ENCODE measurements at regions of chr2 and their contacts with region 1.

Region 1: DNA sequence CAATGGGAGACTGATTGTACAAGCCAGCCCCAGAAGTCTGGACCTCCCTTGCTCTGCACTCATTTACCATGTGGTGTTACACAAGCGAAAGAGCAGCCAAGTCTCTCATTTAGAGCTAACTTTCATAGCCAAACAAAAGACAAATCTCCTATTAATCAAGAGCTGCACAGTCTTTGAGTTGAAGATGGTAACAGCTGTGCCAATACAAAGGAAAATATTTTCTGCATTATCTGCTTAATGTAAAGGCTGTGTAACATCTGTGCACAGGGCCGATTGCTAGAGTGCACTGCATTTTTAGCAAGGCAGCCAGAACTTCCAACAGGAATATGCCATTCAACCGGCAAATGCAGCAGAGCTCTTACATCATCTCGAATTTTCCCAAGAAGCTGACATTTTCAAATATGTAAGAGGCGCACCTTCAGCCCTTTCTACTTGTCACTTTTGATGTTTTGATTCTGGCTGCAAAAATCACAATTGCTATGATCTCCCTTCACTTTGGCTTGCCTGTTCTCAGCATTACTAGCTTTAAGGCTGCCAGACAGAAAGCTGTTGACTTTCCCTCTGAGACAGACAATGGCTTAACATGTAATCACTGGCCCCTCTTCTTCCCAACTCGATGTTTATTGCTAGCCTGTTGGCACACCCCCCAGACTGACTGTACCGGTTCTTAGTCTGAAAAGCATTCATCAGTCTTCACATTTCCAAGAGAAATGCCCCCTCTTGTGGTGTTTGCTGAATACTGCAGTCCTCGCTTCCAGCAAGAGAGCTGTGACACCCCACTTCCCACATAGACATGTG is 96.9 kb upstream of the TANK start:
- DNase-seq: peak; percentile 48
- CTCF ChIP-seq: peak; percentile 89

Region 2: GRCh38 chr2:160252278-160252887 is 811.0 kb before region 1 on chr2:
- CTCF ChIA-PET with region 1: interaction called, 11 read pairs
- POLR2A ChIA-PET with region 1: no interaction called
- DNase-seq: peak; percentile 26
- CTCF ChIP-seq: peak; percentile 61

Region 3: DNA sequence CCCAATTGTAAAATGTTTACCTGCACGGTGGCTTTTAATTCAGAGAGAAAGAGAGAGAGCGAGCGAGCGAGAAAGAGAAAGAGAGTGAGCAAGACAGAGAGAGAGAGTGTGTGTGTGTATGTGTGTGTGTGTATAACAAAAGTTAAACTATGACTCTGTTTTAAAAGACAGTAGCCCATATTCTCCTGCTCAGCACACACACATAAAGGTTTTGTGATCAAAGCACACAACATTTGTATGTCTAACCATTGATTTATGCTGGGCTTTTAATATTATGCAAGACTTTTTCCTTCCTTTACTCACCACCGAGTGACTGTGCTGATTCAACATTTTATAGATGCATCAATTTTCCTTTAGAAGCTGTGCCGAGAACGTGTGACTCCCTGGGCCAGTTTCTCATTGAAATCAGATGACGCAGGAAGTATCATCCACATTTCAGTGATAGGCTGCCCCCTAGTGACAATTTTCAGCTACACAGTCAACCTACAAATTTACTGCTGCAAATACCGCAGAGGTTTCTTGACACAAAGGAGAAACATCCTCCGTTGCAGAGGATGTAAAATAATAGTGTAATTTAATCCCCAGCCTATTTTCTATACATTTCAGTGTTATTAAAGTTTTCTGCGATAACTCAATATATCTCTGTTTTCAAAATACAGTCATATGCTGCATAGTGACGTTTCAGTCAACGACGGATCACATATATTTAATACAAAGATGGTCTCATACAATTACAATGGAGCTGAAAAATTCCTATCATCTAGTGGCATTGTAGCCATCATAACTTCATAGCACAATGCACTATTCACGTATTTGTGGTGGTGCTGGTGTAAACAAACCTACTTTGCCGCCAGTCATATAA is 69.0 kb before region 1 on chr2:
- CTCF ChIA-PET with region 1: interaction called, 13 read pairs
- POLR2A ChIA-PET with region 1: no interaction called
- DNase-seq: peak; percentile 46
- CTCF ChIP-seq: peak; percentile 81

Region 4: GRCh38 chr2:161052214-161052613 is 11.1 kb before region 1 on chr2:
- CTCF ChIA-PET with region 1: interaction called, 38 read pairs
- POLR2A ChIA-PET with region 1: no interaction called
- DNase-seq: no peak
- CTCF ChIP-seq: no peak

Region 5: DNA sequence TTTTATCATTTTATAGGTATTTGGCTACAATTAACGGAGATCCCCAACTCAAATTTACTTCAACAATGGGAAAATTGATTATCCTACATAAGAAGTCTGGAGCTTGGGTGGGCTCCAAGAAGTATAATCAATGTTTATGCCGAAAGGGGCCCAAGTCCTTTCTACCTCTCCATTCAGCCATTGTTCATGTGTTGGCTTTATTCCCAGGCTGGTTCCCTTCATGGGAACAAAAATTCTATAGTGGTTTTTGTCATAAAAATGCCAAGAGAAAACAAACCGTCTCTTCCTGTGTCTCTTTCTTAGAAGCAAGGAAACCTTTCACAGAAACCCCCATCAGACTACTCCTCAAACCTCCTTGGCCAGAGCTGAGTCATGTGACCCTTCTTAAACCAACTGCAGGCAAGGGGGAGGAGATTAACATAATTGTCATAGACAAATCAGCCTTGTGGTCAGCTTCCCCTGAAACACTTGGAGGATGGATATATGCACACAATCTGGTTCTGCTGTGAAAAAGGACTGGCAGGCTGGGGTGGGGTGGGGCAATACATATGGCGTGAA is 21.8 kb after region 1 on chr2:
- CTCF ChIA-PET with region 1: interaction called, 105 read pairs
- POLR2A ChIA-PET with region 1: no interaction called
- DNase-seq: no peak
- CTCF ChIP-seq: no peak

Region 6: GRCh38 chr2:161104054-161104553 is 40.7 kb after region 1 on chr2:
- CTCF ChIA-PET with region 1: interaction called, 11 read pairs
- POLR2A ChIA-PET with region 1: no interaction called
- DNase-seq: peak; percentile 39
- CTCF ChIP-seq: no peak

Region 7: GRCh38 chr2:161228511-161229240 is 165.3 kb after region 1 on chr2:
- CTCF ChIA-PET with region 1: interaction called, 12 read pairs
- POLR2A ChIA-PET with region 1: no interaction called
- DNase-seq: no peak
- CTCF ChIP-seq: no peak

Measured in GM10248 (cell line).